ENCODE measurements at regions of chr1 and their contacts with region 1.

Region 1: GRCh38 chr1:229341774-229342655 is 832 bp downstream of the CCSAP start:
- DNase-seq: peak; percentile 9
- H3K4me3 ChIP-seq: peak overlapping the region; percentile 81 to 93 (median 85)
- H3K27ac ChIP-seq: peak overlapping the region; percentile 66
- H3K4me1 ChIP-seq: peaks cover 3% of the 10 kb centered on the region
- H3K27me3 ChIP-seq: peaks cover 3% of the 10 kb centered on the region
- CTCF ChIP-seq: no peak

Region 2: GRCh38 chr1:229440851-229441537 is 99.0 kb after region 1 on chr1:
- dilution Hi-C with region 1: loop called (anchors 10 kb)
- DNase-seq: no peak
- H3K4me3 ChIP-seq: no peak overlapping the region
- H3K27ac ChIP-seq: no peak overlapping the region
- H3K4me1 ChIP-seq: peaks cover 3% of the 10 kb centered on the region
- H3K27me3 ChIP-seq: peaks cover 2% of the 10 kb centered on the region
- CTCF ChIP-seq: no peak

Region 3: DNA sequence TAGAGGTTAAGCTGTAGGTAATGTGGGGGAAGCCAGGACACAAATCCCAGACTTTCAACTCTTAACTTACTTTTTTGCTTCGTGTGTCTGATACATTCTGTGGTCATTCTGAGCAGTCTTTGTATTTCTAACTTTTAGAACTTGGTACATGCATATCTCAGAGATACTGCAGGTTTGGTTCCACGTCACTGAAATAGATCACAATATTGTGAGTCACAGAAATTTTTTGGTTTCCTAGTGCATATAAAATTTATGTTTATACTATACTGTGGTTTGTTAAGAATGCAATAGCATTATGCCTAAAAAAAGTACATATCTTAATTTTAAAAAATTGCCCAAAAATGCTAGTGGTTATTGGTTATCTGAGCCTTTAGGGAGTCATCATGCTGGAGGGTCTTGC is 287.2 kb after region 1 on chr1:
- dilution Hi-C with region 1: no loop called
- DNase-seq: no peak
- H3K4me3 ChIP-seq: no peak overlapping the region
- H3K27ac ChIP-seq: no peak overlapping the region
- H3K4me1 ChIP-seq: peaks cover 6% of the 10 kb centered on the region
- H3K27me3 ChIP-seq: no peaks in the 10 kb centered on the region
- CTCF ChIP-seq: no peak

Measured in keratinocyte (primary cell).